ENCODE measurements at regions of chr20 and their contacts with region 1.

Region 1: GRCh38 chr20:1965520-1966351 is 28.1 kb downstream of the PDYN start:
- DNase-seq: no peak
- H3K4me3 ChIP-seq: no peak overlapping the region
- H3K27me3 ChIP-seq: peaks cover 23% of the 10 kb centered on the region
- CTCF ChIP-seq: peak; percentile 94

Region 2: GRCh38 chr20:1860446-1860845 is 105.3 kb before region 1 on chr20:
- CTCF ChIA-PET with region 1: no interaction called
- POLR2A ChIA-PET with region 1: no interaction called
- DNase-seq: no peak
- H3K4me3 ChIP-seq: no peak overlapping the region
- H3K27me3 ChIP-seq: no peaks in the 10 kb centered on the region; the same call in 1 of the 2 replicates
- CTCF ChIP-seq: no peak

Region 3: DNA sequence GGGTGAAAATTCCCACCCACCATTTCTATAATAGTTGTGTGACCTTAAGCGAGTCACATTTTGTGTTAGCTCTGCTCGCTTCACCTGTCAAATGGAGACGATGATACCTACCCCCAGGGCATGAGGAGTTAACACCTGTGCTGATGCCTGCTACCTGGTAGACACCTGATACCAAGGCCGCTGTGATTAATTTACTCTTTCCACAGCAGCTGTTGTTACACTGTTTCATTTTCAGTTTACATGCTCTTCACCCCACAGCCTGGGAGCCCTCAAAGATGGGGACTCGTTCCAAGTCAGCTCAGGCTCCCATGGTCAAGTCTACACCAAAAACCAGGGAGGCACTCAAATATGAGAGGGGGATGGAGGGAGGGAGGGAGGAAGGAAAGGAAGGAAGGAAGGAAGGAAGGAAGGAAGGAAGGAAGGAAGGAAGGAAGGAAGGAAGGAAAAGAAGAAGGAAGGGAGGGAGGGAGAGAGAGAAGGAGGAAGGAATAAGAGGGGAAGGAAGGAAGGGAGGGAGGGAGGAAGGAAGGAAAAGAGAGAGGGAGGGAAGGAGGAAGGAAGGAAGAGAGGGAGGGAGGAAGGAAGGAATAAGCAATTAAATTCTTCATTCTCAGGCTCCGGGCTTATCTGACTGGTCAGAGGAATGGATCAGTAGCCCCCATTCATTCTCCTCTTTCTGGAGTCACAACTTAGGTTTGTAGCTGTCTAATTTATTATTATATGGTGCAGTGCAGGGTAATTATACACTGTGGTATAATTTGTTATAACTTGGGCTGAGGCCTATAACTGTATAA is 12.8 kb before region 1 on chr20:
- CTCF ChIA-PET with region 1: interaction called, 19 read pairs
- POLR2A ChIA-PET with region 1: no interaction called
- DNase-seq: no peak
- H3K4me3 ChIP-seq: no peak overlapping the region
- H3K27me3 ChIP-seq: peaks cover 9% of the 10 kb centered on the region
- CTCF ChIP-seq: no peak

Measured in BJ (cell line).